PC-3 (cell line): ENCODE measurements at regions of chr19 and their contacts with region 1.

Region 1: DNA sequence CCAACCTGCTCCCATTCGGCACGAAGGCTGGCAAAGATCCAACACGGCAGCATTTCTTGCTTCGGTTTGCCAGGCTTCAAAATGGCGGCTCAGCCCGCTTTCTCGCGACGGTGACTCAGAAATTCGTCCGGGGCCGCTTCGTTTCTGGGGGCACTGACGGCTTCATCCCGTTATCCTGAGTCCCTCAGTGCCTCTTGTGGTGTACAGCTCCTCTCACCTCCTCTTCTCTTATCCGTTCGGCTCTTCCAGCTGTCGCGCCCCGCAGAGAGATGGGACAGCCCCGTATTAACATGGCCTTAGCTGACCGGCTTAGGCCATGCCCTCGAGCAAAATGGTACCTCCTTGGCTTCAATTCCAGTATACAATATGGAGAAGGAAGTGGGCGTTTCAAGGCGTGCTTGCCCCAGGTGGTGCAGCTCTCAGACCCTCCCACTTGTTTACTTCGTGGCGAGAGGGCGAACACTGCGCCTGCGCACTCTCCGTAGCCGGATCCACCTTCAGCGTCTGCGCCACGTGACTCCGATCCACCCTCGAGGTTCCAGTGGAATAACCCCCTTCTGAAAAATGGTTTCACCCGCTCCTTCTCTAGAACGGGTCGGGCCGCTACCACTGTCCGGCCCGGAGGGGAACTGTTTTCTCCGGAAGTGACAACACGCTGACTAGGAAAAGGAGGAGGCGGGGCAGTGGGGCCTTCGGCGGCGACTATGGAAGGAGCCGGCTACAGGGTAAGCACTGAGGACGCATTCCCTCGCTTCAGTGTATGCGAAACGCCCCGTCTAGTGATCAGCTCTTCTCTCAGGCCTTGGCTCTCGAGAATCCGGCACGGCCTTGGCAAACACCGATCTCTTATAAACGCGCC is at the starts of genes AKT1S1 and TBC1D17:
- DNase-seq: peak; percentile 100
- ATAC-seq: peak; percentile 65
- H3K4me3 ChIP-seq: peak within 1 kb of the TSS; percentile 93
- H3K27ac ChIP-seq: peak within 1 kb of the TSS; percentile 91
- H3K4me1 ChIP-seq: peaks cover 26% of the 10 kb centered on the region
- H3K27me3 ChIP-seq: no peaks in the 10 kb centered on the region
- CTCF ChIP-seq: no peak
- total RNA-seq, gene AKT1S1: 42.3 and 61.0 TPM in 2 replicates
- total RNA-seq, gene TBC1D17: 17.8 and 18.8 TPM in 2 replicates

Region 2: GRCh38 chr19:49916842-49917733 is 39.8 kb after region 1 on chr19:
- CTCF ChIA-PET with region 1: no interaction called
- POLR2A ChIA-PET with region 1: interaction called, 31 read pairs
- intact Hi-C with region 1: no loop called
- DNase-seq: no peak
- ATAC-seq: 0 out of 2 replicates have a peak, but pooled peaks have one; percentile 24
- H3K4me3 ChIP-seq: no peak overlapping the region
- H3K27ac ChIP-seq: no peak overlapping the region
- H3K4me1 ChIP-seq: peaks cover under 1% of the 10 kb centered on the region
- H3K27me3 ChIP-seq: no peaks in the 10 kb centered on the region
- CTCF ChIP-seq: peak; percentile 60

Region 3: GRCh38 chr19:49929611-49930482 is 52.6 kb after region 1 on chr19:
- CTCF ChIA-PET with region 1: no interaction called
- POLR2A ChIA-PET with region 1: no interaction called
- intact Hi-C with region 1: loop called (anchors 1 kb)
- DNase-seq: peak; percentile 98
- ATAC-seq: peak; percentile 74
- H3K4me3 ChIP-seq: peak overlapping the region; percentile 81
- H3K27ac ChIP-seq: peak overlapping the region; percentile 92
- H3K4me1 ChIP-seq: peaks cover 59% of the 10 kb centered on the region
- H3K27me3 ChIP-seq: no peaks in the 10 kb centered on the region
- CTCF ChIP-seq: no peak